ENCODE measurements at regions of chr9 and their contacts with region 1.

Region 1: GRCh38 chr9:68949271-68950000 is 64.5 kb downstream of the PRKACG start:
- DNase-seq: no peak
- H3K4me3 Mint-ChIP-seq: no peak overlapping the region
- H3K27ac Mint-ChIP-seq: peak overlapping the region; percentile 74
- H3K4me1 Mint-ChIP-seq: peaks cover 72% of the 10 kb centered on the region
- H3K27me3 Mint-ChIP-seq: no peaks in the 10 kb centered on the region

Region 2: GRCh38 chr9:68669218-68669617 is 280.2 kb before region 1 on chr9:
- intact Hi-C with region 1: no loop called
- DNase-seq: no peak
- H3K4me3 Mint-ChIP-seq: no peak overlapping the region
- H3K27ac Mint-ChIP-seq: no peak overlapping the region
- H3K4me1 Mint-ChIP-seq: peaks cover 22% of the 10 kb centered on the region
- H3K27me3 Mint-ChIP-seq: no peaks in the 10 kb centered on the region

Region 3: DNA sequence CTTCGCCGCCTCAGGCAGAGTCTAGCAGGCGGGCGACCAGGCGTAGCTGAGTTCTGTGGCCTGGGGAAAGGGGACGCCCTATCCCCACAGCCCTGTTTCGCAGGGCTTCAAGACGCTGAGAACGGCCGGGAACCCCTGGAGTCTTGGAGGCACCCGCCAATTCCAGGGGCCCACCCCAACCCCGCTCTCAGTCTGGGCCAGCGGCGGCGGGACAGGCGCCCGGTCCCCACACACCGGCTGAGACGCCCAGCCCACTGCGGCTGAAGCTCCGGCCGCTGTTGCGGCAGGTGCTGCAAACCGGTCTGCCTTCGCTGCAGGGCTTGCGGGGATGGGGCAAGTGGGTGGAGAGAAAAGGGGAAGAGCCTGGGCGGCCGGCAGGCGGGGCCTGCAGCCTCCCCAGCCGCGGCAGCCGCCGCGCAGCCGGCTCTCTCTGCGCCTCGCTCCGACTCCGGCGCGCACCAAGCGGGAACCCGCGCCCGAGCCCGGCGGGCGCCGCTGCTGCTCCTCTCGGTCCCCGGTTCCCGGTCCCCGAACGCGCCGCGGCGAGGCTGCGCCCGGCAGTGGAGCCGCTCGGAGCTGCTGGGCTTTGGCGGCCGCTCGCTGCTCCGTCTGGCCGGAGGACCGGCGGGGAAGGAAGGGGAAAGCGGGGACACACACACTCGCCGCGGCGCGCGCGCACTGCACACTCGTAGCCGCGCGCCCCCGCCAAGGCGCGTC is 244.5 kb before region 1 on chr9 and contains the start of gene PIP5K1B:
- intact Hi-C with region 1: loop called (anchors 2 kb)
- DNase-seq: peak; percentile 69
- H3K4me3 Mint-ChIP-seq: peak within 1 kb of the TSS; percentile 88
- H3K27ac Mint-ChIP-seq: peak within 1 kb of the TSS; percentile 67
- H3K4me1 Mint-ChIP-seq: peaks cover 54% of the 10 kb centered on the region
- H3K27me3 Mint-ChIP-seq: peaks cover 36% of the 10 kb centered on the region
- total RNA-seq, gene PIP5K1B: 76.2 and 77.2 TPM in 2 replicates

Region 4: GRCh38 chr9:68802525-68803015 is 146.9 kb before region 1 on chr9:
- intact Hi-C with region 1: loop called (anchors 2 kb)
- DNase-seq: peak; percentile 13
- H3K4me3 Mint-ChIP-seq: no peak overlapping the region
- H3K27ac Mint-ChIP-seq: no peak overlapping the region
- H3K4me1 Mint-ChIP-seq: peaks cover 21% of the 10 kb centered on the region
- H3K27me3 Mint-ChIP-seq: no peaks in the 10 kb centered on the region

Region 5: GRCh38 chr9:68919661-68920060 is 29.8 kb before region 1 on chr9:
- intact Hi-C with region 1: loop called (anchors 2 kb)
- DNase-seq: no peak
- H3K4me3 Mint-ChIP-seq: no peak overlapping the region
- H3K27ac Mint-ChIP-seq: peak overlapping the region; percentile 51
- H3K4me1 Mint-ChIP-seq: peaks cover 36% of the 10 kb centered on the region
- H3K27me3 Mint-ChIP-seq: no peaks in the 10 kb centered on the region

Region 6: DNA sequence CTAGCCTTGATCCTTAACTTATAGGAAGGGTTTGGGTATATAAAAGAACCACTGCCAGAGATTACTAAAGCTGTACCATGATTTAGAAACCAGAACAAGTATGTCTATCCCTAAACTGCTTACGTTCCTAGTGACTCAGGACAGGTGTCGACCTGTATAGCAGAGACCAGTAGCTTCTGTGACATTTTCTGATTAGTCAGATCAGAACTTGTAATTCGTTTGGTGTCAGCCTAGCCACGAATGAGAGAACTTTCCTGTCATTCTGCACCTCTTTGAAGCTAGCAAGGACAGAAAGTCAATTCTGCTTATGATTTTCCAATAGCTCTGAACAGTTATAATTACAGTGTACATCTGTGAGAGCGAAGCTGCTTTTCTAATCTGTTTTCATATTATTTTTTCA is 25.0 kb after region 1 on chr9:
- intact Hi-C with region 1: loop called (anchors 1 kb)
- DNase-seq: peak; percentile 28
- H3K4me3 Mint-ChIP-seq: peak overlapping the region; percentile 64
- H3K27ac Mint-ChIP-seq: peak overlapping the region; percentile 89
- H3K4me1 Mint-ChIP-seq: peaks cover 66% of the 10 kb centered on the region
- H3K27me3 Mint-ChIP-seq: no peaks in the 10 kb centered on the region

Region 7: GRCh38 chr9:69004836-69005235 is 55.4 kb after region 1 on chr9:
- intact Hi-C with region 1: no loop called
- DNase-seq: no peak
- H3K4me3 Mint-ChIP-seq: no peak overlapping the region
- H3K27ac Mint-ChIP-seq: no peak overlapping the region
- H3K4me1 Mint-ChIP-seq: peaks cover 12% of the 10 kb centered on the region
- H3K27me3 Mint-ChIP-seq: peaks cover 2% of the 10 kb centered on the region

Region 8: GRCh38 chr9:69027355-69028096 is 78.1 kb after region 1 on chr9:
- intact Hi-C with region 1: loop called (anchors 5 kb)
- DNase-seq: peak; percentile 30
- H3K4me3 Mint-ChIP-seq: no peak overlapping the region
- H3K27ac Mint-ChIP-seq: no peak overlapping the region
- H3K4me1 Mint-ChIP-seq: peaks cover 54% of the 10 kb centered on the region
- H3K27me3 Mint-ChIP-seq: no peaks in the 10 kb centered on the region